ENCODE measurements at regions of chr6 and their contacts with region 1.

Region 1: DNA sequence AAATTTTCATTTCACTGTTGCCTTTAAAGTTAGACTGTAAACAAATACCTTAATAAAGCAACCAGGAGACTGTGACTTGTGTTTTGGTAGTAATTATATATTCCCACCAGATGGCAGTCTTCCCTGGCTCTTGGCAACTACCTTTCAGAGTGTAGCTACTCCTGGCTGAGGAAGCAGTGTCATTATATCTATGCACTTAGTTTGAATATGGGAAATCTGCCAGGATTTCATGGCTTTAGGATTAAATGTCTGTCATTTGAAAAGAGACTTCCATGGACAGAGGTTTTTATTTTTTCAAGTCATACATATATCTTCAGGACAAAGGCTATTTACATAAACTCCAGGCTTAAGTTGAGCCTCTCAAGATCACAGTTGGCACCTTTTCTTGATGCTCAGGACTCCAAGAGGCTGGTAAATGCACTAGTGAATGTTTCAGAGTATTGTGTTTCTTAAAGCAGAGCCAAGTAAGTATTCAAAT is 160.1 kb downstream of the C6orf58 start:
- DNase-seq: no peak
- ATAC-seq: peak; percentile 71 to 75
- H3K4me3 ChIP-seq: no peak overlapping the region
- H3K27ac ChIP-seq: no peak overlapping the region
- H3K4me1 ChIP-seq: no peaks in the 10 kb centered on the region
- H3K27me3 ChIP-seq: no peaks in the 10 kb centered on the region

Region 2: DNA sequence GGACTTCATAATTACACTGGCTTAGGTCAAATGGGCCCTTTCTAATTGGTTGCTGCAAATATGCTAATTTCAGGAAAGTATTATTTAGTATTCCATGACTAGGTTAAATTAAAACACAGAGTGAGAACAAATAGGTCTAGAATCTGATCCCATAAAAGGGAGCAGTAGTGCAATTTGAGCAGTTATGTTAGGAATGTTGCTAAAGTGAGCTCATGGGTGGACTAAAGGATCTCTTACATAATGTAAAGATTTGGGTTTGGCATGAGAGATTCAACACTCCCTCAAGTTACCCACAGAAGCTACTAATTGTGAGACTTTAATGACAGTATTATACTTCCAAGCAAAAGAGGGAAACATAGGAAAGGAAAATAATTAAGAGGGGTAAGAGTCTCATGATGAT is 51.0 kb before region 1 on chr6:
- intact Hi-C with region 1: no loop called
- DNase-seq: no peak
- ATAC-seq: no peak
- H3K4me3 ChIP-seq: no peak overlapping the region
- H3K27ac ChIP-seq: no peak overlapping the region
- H3K4me1 ChIP-seq: no peaks in the 10 kb centered on the region
- H3K27me3 ChIP-seq: no peaks in the 10 kb centered on the region

Region 3: GRCh38 chr6:127706216-127706615 is 30.8 kb before region 1 on chr6:
- intact Hi-C with region 1: no loop called
- DNase-seq: no peak
- ATAC-seq: no peak
- H3K4me3 ChIP-seq: no peak overlapping the region
- H3K27ac ChIP-seq: no peak overlapping the region
- H3K4me1 ChIP-seq: no peaks in the 10 kb centered on the region
- H3K27me3 ChIP-seq: no peaks in the 10 kb centered on the region

Region 4: DNA sequence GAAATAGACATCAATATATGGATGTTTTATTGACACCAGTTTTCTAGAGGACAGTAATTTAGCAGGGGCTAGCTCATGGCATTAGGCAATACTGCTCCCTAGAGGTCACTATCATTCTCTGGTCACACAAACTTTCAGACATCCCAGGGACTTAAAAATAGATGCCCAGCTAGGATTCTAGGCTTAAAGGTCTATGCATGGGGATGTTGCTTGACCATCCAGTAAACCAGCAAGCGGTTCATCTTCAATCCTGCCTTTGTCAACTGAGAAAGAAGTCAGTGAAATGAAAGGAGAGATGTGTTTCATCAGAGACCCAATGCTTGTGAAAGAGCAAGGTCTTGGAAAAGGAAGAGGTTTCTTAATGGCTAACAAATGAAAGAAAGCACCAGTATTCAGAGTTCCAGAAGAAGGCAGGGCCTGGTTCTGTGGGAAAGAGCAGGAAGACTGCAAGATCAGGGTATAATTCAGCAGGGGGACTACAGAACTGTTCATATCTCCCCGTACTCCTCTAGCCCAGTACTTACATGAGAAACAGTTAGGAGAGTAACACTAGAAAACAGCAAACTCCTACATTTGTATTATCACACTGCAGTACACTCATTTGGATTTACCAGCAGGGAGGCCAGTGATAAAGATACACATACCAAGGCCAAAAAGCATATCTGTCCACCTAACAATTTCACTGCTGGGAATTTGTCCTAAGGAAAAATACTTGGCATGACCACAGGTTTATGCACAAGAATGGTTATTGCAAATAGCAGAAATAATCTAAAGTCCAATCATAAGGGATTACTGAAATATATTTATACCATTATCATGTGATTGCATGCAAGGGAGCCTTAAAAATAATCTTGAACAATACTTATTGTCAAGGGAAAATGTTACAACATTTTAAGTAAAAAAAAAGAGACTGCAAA is 994.5 kb after region 1 on chr6:
- intact Hi-C with region 1: loop called in 1 of 4 experiments (anchors 10 kb)
- DNase-seq: no peak
- ATAC-seq: peak; percentile 72 to 80
- H3K4me3 ChIP-seq: no peak overlapping the region
- H3K27ac ChIP-seq: no peak overlapping the region
- H3K4me1 ChIP-seq: no peaks in the 10 kb centered on the region
- H3K27me3 ChIP-seq: no peaks in the 10 kb centered on the region

Measured in right cardiac atrium (tissue), 5 donors.